ENCODE measurements at regions of chr2 and their contacts with region 1.

Region 1: DNA sequence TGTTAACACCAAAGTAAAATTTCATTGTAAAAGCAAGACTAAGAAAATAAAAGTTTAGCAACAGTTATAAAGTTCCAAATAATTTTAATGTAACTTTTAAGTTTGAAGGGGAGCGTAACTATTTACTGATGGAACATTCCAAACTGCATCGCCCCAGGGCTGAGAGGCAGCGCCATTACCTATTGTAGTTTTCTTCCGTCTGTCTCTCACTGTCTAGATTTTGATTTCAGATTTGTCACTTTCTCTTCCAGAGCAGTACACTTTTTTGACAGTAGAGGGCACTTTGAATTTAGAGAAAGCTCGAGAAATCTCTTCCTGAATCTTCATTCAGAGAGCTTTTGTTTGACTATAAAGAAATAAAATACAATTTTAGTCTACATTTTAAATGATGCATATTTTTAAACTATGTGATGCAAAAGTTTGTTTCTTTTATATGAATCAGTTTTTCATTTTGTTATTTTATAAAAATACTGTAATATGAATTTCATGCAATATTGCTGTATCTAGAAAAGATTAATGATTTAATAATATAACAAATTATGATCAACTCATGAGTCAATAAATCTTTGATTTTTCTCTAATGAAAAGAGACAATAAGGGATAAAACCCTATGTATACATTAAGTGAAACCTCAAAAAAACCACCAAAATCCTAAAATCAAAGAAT is 389.8 kb downstream of the FIGN start:
- DNase-seq: peak in 1 of 2 experiments; percentile 20
- H3K4me3 ChIP-seq: no peak overlapping the region
- H3K27ac ChIP-seq: no peak overlapping the region
- H3K4me1 ChIP-seq: peaks cover 13% of the 10 kb centered on the region
- H3K27me3 ChIP-seq: no peaks in the 10 kb centered on the region
- CTCF ChIP-seq: peak; percentile 71

Region 2: GRCh38 chr2:163191372-163191771 is 154.7 kb before region 1 on chr2:
- CTCF ChIA-PET with region 1: no interaction called
- POLR2A ChIA-PET with region 1: no interaction called
- intact Hi-C with region 1: loop called (anchors 2 kb)
- DNase-seq: peak in 1 of 2 experiments; percentile 4
- H3K4me3 ChIP-seq: no peak overlapping the region
- H3K27ac ChIP-seq: no peak overlapping the region
- H3K4me1 ChIP-seq: no peaks in the 10 kb centered on the region
- H3K27me3 ChIP-seq: no peaks in the 10 kb centered on the region
- CTCF ChIP-seq: peak; percentile 68

Region 3: GRCh38 chr2:163312713-163313112 is 33.3 kb before region 1 on chr2:
- CTCF ChIA-PET with region 1: no interaction called
- POLR2A ChIA-PET with region 1: no interaction called
- intact Hi-C with region 1: no loop called
- DNase-seq: no peak
- H3K4me3 ChIP-seq: no peak overlapping the region
- H3K27ac ChIP-seq: no peak overlapping the region
- H3K4me1 ChIP-seq: no peaks in the 10 kb centered on the region
- H3K27me3 ChIP-seq: no peaks in the 10 kb centered on the region
- CTCF ChIP-seq: no peak

Region 4: DNA sequence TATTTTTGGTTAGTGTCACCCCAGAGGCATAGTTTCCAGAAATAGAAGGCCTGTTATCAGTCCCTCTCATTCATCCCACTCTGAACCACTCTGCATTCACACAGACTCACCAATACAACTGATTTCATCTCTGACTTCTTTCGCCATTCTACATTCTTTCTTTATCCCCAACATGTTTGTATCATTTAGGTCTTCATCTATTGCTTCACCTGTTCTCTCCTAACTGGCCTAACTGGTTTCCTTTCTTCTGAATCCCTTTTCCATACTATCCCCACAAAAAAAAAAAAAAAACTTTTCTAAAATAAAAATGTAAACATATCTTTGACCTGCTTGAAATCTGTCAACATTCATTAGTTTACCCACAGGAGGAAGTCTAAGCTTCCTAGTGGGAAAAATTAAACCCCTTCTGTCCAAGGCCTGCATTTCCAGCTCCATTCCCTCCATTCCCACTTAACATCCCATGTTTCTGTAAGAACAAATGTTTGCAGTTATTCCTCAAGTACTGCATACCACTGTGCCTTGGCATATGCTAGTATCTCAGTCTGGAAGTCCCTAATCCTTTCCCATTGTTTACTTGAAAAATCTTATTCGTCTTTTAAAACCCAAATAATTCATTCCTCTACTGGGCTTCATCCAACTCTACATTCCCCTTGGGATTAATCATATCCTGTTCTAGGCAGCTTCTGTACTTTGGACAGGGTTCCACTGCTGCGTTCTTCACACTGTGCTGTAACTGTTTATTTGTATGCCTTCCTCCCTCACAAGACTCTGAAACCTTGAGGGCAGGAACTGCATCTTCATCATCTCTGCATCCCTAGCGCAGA is 321.2 kb after region 1 on chr2:
- CTCF ChIA-PET with region 1: no interaction called
- POLR2A ChIA-PET with region 1: interaction called, 4 read pairs
- intact Hi-C with region 1: loop called (anchors 5 kb)
- DNase-seq: peak; percentile 19 to 71
- H3K4me3 ChIP-seq: no peak overlapping the region
- H3K27ac ChIP-seq: peak overlapping the region; percentile 25; the same call in 1 of the 2 replicates
- H3K4me1 ChIP-seq: peaks cover 29% of the 10 kb centered on the region
- H3K27me3 ChIP-seq: no peaks in the 10 kb centered on the region
- CTCF ChIP-seq: no peak

Region 5: DNA sequence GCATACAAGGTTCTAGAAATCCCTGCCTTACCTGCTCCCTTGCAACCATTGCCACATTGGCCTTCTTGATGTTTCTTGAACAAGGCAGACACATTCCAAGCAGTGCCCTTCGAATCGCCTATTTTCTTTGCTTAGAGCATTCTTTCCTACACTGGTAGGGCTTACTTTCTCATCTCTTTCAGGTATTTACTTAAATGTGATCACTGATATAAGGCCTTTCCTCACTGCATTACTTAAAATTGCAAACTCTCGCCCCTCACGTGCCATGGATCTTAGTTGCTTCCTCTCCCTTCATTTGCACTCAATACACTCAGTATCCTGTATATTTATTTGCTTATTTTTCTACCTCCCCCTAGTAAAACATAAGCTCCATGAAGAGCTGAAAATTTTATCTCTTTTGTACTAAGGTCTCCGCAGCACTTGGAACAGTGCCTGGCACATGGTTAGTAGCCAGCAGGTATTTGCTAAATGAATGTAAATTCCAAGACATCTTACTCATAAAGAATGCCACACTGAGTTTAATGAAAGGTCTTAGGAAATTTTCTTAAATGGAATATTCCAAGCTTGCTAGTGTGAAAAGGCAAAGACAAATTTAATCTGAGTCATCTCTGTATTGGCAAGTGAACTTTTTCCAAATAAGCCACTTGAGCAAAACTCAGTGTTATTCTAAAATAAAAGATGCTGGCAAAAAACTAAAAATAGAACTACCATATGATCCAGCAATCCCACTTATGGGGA is 432.2 kb after region 1 on chr2:
- CTCF ChIA-PET with region 1: no interaction called
- POLR2A ChIA-PET with region 1: no interaction called
- intact Hi-C with region 1: loop called (anchors 2 kb)
- DNase-seq: peak; percentile 66 to 94
- H3K4me3 ChIP-seq: no peak overlapping the region
- H3K27ac ChIP-seq: peak overlapping the region; percentile 68
- H3K4me1 ChIP-seq: peaks cover 63% of the 10 kb centered on the region
- H3K27me3 ChIP-seq: no peaks in the 10 kb centered on the region
- CTCF ChIP-seq: no peak

Region 6: DNA sequence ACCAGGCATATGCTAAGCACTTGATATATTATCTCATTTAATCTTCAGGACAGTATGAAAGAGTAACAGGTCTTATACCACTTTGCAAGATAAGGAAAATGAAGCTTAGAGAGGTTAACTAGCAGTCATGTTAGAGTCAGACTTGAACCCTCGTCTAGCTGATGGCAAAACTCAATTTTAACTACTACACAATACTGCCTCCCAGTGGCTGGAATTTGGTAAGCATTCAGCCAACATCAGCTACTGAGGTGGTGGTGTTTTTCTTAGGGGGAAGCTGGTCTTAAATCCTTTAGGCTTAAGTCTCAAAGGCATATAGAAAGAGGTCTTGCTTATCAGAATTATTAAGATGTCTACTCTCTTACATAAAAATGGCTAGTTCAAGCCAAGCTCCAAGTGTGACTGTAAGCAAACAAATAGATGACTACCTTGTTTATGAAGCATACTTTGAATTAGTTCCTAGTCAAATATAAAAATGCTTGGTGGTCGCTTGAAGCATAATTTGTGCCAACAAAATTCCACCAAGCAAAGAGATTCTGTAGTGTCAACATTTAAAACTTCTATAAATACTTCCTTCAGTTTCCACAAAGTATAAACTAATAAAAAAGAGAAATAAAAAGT is 715.2 kb after region 1 on chr2:
- CTCF ChIA-PET with region 1: no interaction called
- POLR2A ChIA-PET with region 1: no interaction called
- intact Hi-C with region 1: loop called (anchors 5 kb)
- DNase-seq: peak in 1 of 2 experiments; percentile 2
- H3K4me3 ChIP-seq: no peak overlapping the region
- H3K27ac ChIP-seq: no peak overlapping the region
- H3K4me1 ChIP-seq: no peaks in the 10 kb centered on the region
- H3K27me3 ChIP-seq: no peaks in the 10 kb centered on the region
- CTCF ChIP-seq: peak; percentile 72

Region 7: DNA sequence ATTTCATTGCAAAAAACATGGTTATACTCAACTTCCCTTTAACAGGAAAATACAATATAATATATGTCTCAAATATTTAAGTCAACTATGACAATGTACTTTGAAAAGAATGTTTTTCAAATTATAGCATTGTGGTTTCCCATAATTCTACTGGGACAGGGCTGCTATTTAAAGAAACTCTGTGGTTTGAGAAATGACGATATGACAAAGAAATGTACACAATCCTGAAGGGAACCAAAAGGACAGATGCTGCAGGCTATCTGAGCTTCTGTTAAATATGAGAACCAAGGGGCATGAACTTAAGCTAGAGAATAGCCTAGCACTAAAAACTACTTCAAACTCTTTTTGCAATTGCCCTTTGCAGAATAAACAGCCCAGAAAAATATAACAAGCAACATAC is 859.3 kb after region 1 on chr2:
- CTCF ChIA-PET with region 1: no interaction called
- POLR2A ChIA-PET with region 1: no interaction called
- intact Hi-C with region 1: loop called (anchors 2 kb)
- DNase-seq: peak; percentile 12 to 66
- H3K4me3 ChIP-seq: no peak overlapping the region
- H3K27ac ChIP-seq: peak overlapping the region; percentile 48; the same call in 1 of the 2 replicates
- H3K4me1 ChIP-seq: peaks cover 15% of the 10 kb centered on the region
- H3K27me3 ChIP-seq: no peaks in the 10 kb centered on the region
- CTCF ChIP-seq: no peak

Region 8: DNA sequence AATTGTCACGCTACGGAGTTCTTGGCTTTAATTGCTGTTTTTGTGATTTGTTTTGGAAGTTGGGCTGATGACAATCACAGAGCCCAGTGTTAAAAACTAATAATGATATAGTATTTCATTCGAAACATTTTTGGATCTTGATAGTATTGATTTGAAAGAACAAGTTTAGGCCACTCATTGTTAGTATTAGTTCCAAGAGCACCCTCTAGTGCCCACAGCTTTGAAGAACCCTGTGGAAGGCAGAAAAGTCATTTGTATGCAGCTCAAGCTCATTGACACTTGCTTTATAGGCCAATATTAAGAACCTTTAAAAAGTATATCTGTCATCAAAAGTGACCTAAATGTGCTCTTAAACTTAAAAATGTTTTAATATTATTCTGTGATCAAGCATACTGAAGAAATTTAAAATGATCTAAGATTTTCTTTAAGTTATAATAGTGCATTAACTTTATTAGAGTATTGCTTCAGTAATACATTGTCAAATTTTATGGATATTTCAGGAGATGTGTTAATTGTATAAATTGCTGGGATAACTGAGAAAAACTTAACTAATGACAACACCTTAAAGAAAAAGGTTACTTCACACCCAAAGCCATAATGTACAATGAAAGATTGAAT is 1084.2 kb after region 1 on chr2:
- CTCF ChIA-PET with region 1: no interaction called
- POLR2A ChIA-PET with region 1: no interaction called
- intact Hi-C with region 1: loop called (anchors 2 kb)
- DNase-seq: peak in 1 of 2 experiments; percentile 7
- H3K4me3 ChIP-seq: no peak overlapping the region
- H3K27ac ChIP-seq: no peak overlapping the region
- H3K4me1 ChIP-seq: no peaks in the 10 kb centered on the region
- H3K27me3 ChIP-seq: no peaks in the 10 kb centered on the region
- CTCF ChIP-seq: peak; percentile 67

Measured in PC-9 (cell line).